Sciatic nerve (tissue), 2 donors: ENCODE measurements at regions of chr15 and their contacts with region 1.

Region 1: GRCh38 chr15:37550360-37551024 is 383.9 kb upstream of the TMCO5A start:
- DNase-seq: no peak
- ATAC-seq: no peak

Region 2: DNA sequence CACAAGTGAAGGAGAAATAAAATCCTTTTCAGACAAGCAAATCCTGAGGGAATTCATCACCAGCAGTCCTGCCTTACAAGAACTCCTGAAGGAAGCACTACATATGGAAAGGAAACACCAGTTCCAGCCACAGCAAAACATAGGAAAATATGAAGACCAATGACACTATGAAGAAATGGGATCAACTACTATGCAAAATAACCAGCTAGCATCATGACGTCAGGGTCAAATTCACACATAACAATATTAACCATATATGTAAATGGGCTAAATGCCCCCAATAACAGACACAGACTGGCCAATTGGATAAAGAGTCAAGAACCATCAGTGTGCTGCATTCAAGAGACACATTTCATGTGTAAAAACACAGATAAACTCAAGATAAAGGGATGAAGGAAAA is 46.9 kb before region 1 on chr15:
- intact Hi-C with region 1: loop called (anchors 10 kb)
- DNase-seq: no peak
- ATAC-seq: no peak

Region 3: GRCh38 chr15:37870711-37871110 is 320.2 kb after region 1 on chr15:
- intact Hi-C with region 1: no loop called
- DNase-seq: no peak
- ATAC-seq: no peak